Psoas muscle (tissue), 8 donors: ENCODE measurements at regions of chr15 and their contacts with region 1.

Region 1: DNA sequence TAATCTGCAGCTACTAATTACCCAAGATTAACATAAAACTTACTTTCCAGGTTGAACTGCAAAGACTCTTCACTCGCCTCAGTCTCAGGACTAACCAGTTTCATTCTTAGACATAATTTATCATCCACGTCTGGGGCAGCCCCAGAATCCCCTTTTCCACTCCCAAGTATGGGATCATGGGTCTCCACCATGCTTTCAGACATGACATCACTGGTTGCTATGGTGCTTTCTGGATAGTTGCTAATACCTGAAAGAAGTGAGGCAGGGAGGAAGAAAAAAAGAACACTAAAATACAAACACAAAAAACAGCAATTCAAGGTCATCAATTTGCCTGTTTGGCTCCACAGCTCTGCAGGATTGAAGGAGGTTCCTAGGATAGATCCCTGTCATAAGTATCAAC is 46.6 kb downstream of the TP53BP1 start:
- DNase-seq: no peak
- ATAC-seq: no peak
- H3K4me3 ChIP-seq: no peak overlapping the region
- H3K27ac ChIP-seq: no peak overlapping the region
- H3K4me1 ChIP-seq: peaks cover 4% of the 10 kb centered on the region
- H3K27me3 ChIP-seq: no peaks in the 10 kb centered on the region
- CTCF ChIP-seq: no peak

Region 2: DNA sequence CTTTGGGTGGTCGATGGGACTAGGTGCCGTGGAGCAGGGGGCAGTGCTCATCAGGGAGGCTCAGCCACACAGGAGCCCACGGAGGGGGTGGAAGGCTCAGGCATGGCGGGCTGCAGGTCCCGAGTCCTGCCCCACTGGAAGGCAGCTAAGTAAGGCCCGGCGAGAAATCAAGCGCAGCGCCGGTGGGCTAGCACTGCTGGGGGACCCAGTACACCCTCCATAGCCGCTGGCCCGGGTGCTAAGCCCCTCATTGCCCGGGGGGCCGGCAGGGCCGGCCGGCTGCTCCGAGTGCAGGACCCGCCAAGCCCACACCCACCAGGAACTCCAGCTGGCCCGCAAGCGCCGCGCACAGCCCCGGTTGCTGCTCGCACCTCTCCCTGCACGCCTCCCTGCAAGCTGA is 27.5 kb after region 1 on chr15:
- intact Hi-C with region 1: no loop called
- DNase-seq: no peak
- ATAC-seq: no peak
- H3K4me3 ChIP-seq: no peak overlapping the region
- H3K27ac ChIP-seq: no peak overlapping the region
- H3K4me1 ChIP-seq: no peaks in the 10 kb centered on the region
- H3K27me3 ChIP-seq: no peaks in the 10 kb centered on the region
- CTCF ChIP-seq: no peak

Region 3: DNA sequence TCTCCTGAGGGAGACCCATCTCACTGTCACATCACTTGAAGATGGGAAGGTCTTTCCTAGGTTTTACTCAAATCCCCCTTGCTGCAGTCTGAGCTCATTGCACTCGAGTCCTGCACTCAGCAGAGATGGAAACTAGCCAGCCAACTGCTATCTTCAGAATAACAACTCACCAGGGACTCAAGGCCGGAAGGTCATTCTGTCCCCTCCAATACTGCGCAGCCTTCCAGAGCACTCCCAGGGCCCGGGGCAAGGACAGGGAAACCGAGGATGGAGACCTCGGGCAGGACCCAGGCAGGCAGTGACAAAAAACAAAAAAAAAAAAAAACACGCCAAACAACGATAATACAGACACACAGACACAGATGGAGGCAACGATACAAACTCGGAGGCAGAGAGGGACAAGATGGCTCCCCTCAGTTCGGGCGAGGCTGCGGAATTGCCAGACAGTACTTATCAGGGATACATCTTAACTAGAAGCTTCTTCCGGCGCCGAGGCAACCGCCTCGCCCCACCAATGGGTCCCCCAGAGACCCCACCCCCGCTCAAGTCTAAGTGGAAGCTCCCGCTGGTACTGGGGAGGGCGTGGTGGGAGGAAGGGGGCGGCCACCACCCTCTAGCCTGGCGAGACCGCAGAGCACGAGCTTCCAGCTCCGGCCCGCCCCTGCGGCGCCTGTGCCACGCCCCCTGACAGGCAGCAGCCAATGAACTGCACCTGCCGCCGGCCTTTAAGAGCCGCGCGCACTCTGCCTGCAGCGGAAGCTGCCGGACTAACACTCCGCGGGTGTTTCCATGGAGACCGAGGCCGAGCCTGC is 64.1 kb after region 1 on chr15:
- intact Hi-C with region 1: loop called in 1 of 2 experiments (anchors 5 kb)
- DNase-seq: peak; percentile 98 to 99
- ATAC-seq: peak; percentile 97 to 99 (median 98)
- H3K4me3 ChIP-seq: peak overlapping the region; percentile 67
- H3K27ac ChIP-seq: peak overlapping the region; percentile 88
- H3K4me1 ChIP-seq: peaks cover 27% of the 10 kb centered on the region
- H3K27me3 ChIP-seq: no peaks in the 10 kb centered on the region
- CTCF ChIP-seq: peak; percentile 50